ENCODE measurements at regions of chr19 and their contacts with region 1.

Region 1: DNA sequence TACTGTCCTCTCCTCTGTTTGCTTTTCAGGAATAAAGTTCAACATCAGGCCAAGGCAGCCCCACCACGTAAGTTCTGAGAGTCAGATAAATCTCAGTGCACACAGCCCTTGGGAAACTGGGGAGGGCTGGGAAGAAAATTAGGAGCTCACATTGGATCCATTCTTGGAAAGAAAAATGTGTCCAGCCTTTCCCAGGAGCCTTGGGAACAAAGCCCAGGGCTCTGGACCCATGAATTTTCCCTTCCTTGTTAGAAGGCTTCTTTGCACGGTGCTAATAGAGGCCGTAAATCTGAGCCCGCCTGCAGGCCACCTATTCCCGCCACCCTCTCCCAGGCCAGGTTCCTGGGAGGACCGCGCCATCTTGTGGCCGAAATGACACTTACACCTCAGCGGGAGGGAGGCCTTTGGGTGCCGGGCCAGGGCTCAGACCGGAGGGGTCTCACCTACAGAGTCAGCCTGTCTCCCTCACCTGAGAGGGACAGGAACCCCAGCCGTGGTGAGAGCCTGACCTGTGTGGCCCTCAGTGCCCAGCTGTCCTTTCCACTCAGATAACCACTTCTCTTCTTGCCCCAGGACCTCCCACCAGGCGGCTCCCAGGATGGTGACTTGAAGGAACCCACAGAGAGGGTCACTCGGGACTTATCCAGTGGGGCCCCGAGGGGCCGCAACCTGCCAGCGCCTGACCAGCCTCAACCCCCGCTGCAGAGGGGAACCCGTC is 25.1 kb upstream of the KCTD15 start:
- DNase-seq: peak; percentile 40
- H3K4me3 Mint-ChIP-seq: no peak overlapping the region
- H3K27ac Mint-ChIP-seq: no peak overlapping the region
- H3K4me1 Mint-ChIP-seq: no peaks in the 10 kb centered on the region
- H3K27me3 Mint-ChIP-seq: no peaks in the 10 kb centered on the region

Region 2: DNA sequence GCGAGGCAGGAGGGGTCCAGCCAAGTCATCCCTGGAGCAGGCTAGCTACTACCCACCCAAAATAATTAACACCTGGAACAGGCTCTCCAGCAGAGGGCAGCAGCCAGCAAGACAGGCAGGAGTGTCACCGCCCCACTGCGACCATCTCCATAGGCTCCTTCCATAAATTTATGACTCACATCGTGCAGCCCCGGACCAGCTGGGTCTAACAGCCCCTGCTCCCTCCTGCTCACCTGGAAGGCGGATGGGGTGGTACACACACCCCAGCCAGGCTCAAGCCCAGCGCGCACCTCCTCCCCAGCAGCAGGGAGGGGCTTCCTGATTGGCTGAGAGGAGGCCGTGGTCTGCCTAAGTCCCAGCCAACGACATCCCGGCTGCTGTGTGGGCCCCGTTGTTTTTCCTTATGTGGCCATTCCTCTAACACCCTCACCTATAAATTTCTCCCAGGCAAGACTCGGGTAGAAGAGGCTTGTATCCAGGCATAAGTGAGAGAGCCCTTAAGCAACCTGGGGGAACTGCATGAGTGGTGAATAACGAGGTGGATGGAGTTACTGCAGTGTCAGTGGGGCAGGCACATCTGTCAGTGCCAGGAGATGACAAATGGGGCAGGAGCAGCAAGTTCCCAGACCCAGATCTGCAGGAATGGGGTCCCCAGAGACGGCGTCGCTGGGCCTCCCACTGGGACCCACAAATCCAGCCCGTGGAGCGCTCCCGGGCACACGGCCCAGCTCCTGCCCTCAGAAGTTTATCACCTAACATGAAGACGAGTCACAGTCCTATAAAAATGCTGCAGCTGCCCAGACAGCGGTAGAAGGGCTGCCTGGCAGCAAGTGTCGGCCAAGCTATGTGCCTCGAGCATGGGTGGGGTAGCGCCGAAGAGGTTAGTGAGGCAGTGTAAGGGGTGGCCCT is 355.0 kb before region 1 on chr19:
- intact Hi-C with region 1: loop called (anchors 1 kb)
- DNase-seq: peak; percentile 38
- H3K4me3 Mint-ChIP-seq: no peak overlapping the region
- H3K27ac Mint-ChIP-seq: no peak overlapping the region
- H3K4me1 Mint-ChIP-seq: peaks cover 6% of the 10 kb centered on the region
- H3K27me3 Mint-ChIP-seq: no peaks in the 10 kb centered on the region

Region 3: GRCh38 chr19:33514885-33515551 is 256.5 kb before region 1 on chr19:
- intact Hi-C with region 1: no loop called
- DNase-seq: no peak
- H3K4me3 Mint-ChIP-seq: no peak overlapping the region
- H3K27ac Mint-ChIP-seq: no peak overlapping the region
- H3K4me1 Mint-ChIP-seq: no peaks in the 10 kb centered on the region
- H3K27me3 Mint-ChIP-seq: no peaks in the 10 kb centered on the region

Region 4: GRCh38 chr19:33639035-33639681 is 132.4 kb before region 1 on chr19:
- intact Hi-C with region 1: no loop called
- DNase-seq: no peak
- H3K4me3 Mint-ChIP-seq: no peak overlapping the region
- H3K27ac Mint-ChIP-seq: no peak overlapping the region
- H3K4me1 Mint-ChIP-seq: no peaks in the 10 kb centered on the region
- H3K27me3 Mint-ChIP-seq: no peaks in the 10 kb centered on the region

Region 5: GRCh38 chr19:33690378-33691029 is 81.0 kb before region 1 on chr19:
- intact Hi-C with region 1: no loop called
- DNase-seq: no peak
- H3K4me3 Mint-ChIP-seq: no peak overlapping the region
- H3K27ac Mint-ChIP-seq: no peak overlapping the region
- H3K4me1 Mint-ChIP-seq: no peaks in the 10 kb centered on the region
- H3K27me3 Mint-ChIP-seq: peaks cover 2% of the 10 kb centered on the region

Measured in activated T-helper 1 cell treated with anti-CD3 and anti-CD28 coated beads, Interleukin-12 subunit alpha, Interleukin-12 subunit beta, Interleukin-2, Interleukin-4 antibody, amounts not matched to agents 30 ng/mL and 10 ng/mL and 1 ng/mL, durations not matched to agents 14 hours and 24 hours and 36 hours (primary cell).